HEK293 (cell line): ENCODE measurements at regions of chr15 and their contacts with region 1.

Region 1: GRCh38 chr15:66851226-66852071 is 149.4 kb downstream of the SMAD6 start:
- H3K4me3 ChIP-seq: no peak overlapping the region
- H3K27ac ChIP-seq: peak overlapping the region; percentile 42
- H3K4me1 ChIP-seq: peaks cover 7% of the 10 kb centered on the region
- CTCF ChIP-seq: peak; percentile 99

Region 2: DNA sequence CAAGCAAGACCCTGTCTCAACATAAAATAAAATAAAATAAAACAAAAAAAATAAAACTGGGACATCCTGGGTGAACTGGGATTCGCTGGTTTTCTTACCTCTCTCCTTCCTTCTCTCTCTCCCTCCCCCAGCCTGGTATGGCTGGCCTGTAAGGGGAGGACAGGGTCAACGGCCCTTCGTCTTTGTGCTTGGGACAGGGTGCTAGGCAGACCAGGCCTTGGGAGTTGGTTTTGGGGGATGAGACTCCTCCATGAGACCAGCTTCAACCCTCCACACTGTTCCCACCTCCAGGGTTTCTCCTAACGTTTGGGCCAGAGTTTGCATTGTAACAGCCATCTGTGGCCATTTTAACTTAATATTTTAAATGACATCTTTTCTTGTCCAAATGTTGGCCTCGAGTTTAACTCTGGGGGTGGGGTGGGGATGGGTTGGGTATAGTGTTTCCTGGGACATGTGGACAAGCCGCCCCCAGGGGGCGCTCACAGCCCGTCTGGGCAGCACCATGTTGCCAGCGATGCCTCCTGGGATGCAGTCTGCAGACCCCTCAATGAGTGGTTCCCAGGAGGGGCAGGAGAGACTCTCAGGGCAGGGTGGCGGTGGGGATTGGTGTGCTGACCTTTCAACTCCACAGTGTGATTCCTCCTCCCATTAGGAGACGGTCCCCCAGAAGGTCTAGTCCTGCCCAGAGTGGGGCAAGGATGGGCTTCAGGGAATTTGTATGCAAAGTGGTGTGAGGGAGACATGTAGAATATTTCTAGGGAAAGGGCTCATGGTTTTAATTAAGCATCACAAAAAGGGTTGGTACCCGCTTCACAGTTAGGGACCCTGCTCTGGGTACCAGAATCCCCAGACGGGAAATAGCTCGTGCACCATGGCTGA is 247.9 kb before region 1 on chr15:
- CTCF ChIA-PET with region 1: interaction called, 139 read pairs
- POLR2A ChIA-PET with region 1: no interaction called
- H3K4me3 ChIP-seq: no peak overlapping the region
- H3K27ac ChIP-seq: no peak overlapping the region
- H3K4me1 ChIP-seq: no peaks in the 10 kb centered on the region
- CTCF ChIP-seq: peak; percentile 75

Region 3: DNA sequence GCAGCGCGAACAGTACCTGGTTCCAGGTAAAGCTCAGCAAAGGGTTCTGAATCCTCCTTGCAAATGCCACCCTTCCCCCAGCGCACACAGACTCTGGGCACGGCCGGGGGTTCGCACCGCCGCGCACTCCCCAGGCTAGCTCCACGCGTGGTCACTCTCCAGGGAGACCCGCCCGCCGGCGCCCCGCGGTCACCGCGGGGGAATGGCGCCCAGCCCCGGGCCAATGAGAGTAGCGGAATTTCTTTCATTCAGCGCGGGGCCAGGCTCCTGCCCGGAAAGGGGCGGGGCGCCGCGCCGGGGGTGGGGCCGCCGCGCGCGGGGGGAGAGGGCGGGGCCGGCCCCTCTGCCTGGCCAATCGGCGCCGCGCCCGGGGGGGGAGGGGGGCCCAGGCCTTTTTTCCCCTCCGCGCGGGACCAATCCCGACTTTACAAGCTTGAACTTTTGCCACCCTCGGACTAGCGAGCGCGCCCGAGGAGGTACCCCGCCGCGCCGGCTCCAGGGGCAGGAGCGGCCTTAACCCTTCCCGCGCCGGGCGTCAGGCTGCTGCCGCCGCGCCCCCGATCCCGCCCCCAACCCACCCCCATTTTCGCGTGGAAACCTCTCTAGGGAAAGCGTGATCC is 150.5 kb before region 1 on chr15:
- CTCF ChIA-PET with region 1: interaction called, 37 read pairs
- POLR2A ChIA-PET with region 1: interaction called, 30 read pairs
- H3K4me3 ChIP-seq: peak overlapping the region; percentile 57
- H3K27ac ChIP-seq: peak overlapping the region; percentile 96
- H3K4me1 ChIP-seq: peaks cover 16% of the 10 kb centered on the region
- CTCF ChIP-seq: no peak

Region 4: GRCh38 chr15:66780172-66780972 is 71.1 kb before region 1 on chr15:
- CTCF ChIA-PET with region 1: interaction called, 76 read pairs
- POLR2A ChIA-PET with region 1: interaction called, 3 read pairs
- H3K4me3 ChIP-seq: no peak overlapping the region
- H3K27ac ChIP-seq: no peak overlapping the region
- H3K4me1 ChIP-seq: peaks cover 10% of the 10 kb centered on the region
- CTCF ChIP-seq: no peak

Region 5: GRCh38 chr15:66816201-66816600 is 35.2 kb before region 1 on chr15:
- CTCF ChIA-PET with region 1: interaction called, 15 read pairs
- POLR2A ChIA-PET with region 1: no interaction called
- H3K4me3 ChIP-seq: no peak overlapping the region
- H3K27ac ChIP-seq: no peak overlapping the region
- H3K4me1 ChIP-seq: no peaks in the 10 kb centered on the region
- CTCF ChIP-seq: no peak

Region 6: DNA sequence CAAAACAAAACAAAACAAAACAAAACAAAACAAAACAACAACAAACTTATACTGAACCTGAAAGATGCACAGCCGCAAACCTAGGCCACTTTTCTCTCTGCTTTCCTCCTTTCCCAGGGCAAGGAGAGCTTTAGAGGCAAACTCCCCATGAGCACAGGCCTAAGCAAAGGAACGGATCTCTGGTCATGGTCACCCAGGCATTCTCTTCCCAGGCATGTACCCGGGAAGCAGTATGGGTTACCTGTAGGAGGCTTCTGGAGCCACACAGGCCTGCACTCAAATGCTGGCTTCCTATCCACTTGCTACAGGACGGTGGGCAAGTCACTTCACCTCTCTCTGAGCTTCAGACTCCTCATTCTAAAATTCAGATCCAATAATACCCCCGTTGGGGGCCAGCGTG is 22.4 kb after region 1 on chr15:
- CTCF ChIA-PET with region 1: interaction called, 19 read pairs
- POLR2A ChIA-PET with region 1: no interaction called
- H3K4me3 ChIP-seq: no peak overlapping the region
- H3K27ac ChIP-seq: no peak overlapping the region
- H3K4me1 ChIP-seq: peaks cover 13% of the 10 kb centered on the region
- CTCF ChIP-seq: no peak

Region 7: DNA sequence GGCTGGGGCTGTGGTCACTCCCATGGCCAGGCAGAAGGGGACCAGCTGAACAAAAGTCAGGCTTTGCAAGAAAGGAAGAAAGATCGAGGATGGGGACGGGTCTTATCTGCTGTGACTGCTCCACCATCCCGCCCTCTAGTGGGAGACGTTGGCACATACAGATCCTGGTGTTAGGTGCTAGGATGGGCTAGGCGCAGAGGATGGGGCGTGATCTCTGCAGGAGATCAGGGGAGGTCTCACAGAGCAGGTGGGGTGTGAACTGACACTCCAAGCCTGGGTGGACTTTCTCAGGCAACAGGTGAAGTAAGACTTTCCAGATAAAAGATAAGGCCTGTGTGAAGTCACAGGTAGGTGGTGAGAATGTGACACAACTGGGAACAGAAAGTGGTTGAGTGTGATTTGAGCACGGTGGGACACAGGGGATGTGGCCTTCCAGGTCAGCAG is 72.0 kb after region 1 on chr15:
- CTCF ChIA-PET with region 1: interaction called, 16 read pairs
- POLR2A ChIA-PET with region 1: no interaction called
- H3K4me3 ChIP-seq: no peak overlapping the region
- H3K27ac ChIP-seq: no peak overlapping the region
- H3K4me1 ChIP-seq: no peaks in the 10 kb centered on the region
- CTCF ChIP-seq: peak; percentile 62